PC-9 (cell line): ENCODE measurements at regions of chr16 and their contacts with region 1.

Region 1: DNA sequence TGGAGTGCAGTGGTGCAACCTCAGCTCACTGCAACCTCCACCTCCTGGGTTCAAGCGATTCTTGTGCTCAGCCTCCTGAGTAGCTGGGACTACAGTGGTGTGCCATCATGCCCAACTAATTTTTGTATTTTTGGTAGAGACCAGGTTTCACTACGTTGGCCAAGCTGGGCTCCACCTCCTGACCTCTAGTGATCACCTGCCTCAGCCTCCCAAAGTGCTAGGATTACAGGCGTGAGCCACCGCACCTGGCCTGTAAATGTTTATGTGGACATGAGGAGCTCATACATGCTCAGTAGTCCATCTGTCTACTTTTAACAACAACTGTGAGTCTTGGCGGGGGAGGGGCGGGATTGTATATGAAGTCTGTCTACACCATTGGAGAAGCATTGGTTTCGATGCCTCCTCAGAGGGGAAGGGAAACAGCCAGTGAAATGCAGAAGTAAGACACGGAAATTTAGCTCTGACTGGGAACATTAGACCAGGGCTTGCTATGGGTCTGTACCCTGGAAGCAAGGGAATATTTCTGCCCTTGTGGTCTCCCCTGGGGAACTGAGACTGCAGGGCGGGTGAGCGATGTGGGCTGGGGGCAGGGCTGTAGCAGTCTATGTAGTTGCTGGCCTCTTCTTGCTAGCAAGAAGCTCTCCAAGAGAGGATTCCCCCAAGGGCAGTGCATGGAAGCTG is 9.3 kb downstream of the NUBP1 start:
- DNase-seq: no peak
- H3K4me3 ChIP-seq: no peak overlapping the region
- H3K27ac ChIP-seq: no peak overlapping the region
- H3K4me1 ChIP-seq: peaks cover 13% of the 10 kb centered on the region
- H3K27me3 ChIP-seq: no peaks in the 10 kb centered on the region
- CTCF ChIP-seq: no peak

Region 2: GRCh38 chr16:10828851-10829731 is 76.1 kb after region 1 on chr16:
- CTCF ChIA-PET with region 1: no interaction called
- POLR2A ChIA-PET with region 1: no interaction called
- intact Hi-C with region 1: loop called (anchors 10 kb)
- DNase-seq: peak in 1 of 2 experiments; percentile 78
- H3K4me3 ChIP-seq: no peak overlapping the region
- H3K27ac ChIP-seq: no peak overlapping the region
- H3K4me1 ChIP-seq: no peaks in the 10 kb centered on the region; the same call in 1 of the 2 replicates
- H3K27me3 ChIP-seq: no peaks in the 10 kb centered on the region; the same call in 1 of the 2 replicates
- CTCF ChIP-seq: no peak